B cell (primary cell): ENCODE measurements at regions of chr1 and their contacts with region 1.

Region 1: GRCh38 chr1:192808518-192809306 is at the start of gene RGS2:
- DNase-seq: peak; percentile 95
- ATAC-seq: peak; percentile 85
- H3K4me3 ChIP-seq: peak within 1 kb of the TSS; percentile 58 to 99 (median 90)
- H3K4me3 Mint-ChIP-seq: peak within 1 kb of the TSS; percentile 96
- H3K27ac ChIP-seq: peak within 1 kb of the TSS; percentile 65 to 76
- H3K27ac Mint-ChIP-seq: peak within 1 kb of the TSS; percentile 95
- H3K4me1 ChIP-seq: peaks cover 23 to 24% of the 10 kb centered on the region in 2 donors
- H3K4me1 Mint-ChIP-seq: peaks cover 46% of the 10 kb centered on the region
- H3K27me3 ChIP-seq: peaks cover 0 to 3% (median 0%) of the 10 kb centered on the region in 4 experiments
- H3K27me3 Mint-ChIP-seq: no peaks in the 10 kb centered on the region
- CTCF ChIP-seq: peak; percentile 15
- total RNA-seq, gene RGS2: 224 and 232 TPM in 2 replicates

Region 2: DNA sequence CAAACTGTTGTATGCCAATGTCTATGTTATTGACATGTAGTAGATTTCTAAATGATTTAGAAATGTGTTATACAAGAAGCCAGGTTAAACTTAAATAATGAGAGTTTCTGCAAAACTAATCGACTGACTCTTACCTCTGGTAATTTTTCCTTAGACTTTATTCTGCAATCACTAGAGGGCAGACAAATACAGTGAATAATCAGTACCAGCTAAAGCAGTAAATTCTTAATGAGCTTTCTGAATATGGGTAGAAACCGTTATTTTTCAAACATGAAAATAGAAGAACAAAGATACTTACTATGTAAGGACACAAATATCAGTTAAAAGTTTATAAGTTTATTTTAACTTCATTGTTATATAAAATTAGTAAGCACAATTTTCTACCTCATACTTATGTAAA is 331.1 kb before region 1 on chr1:
- CTCF ChIA-PET with region 1: interaction called, 127 read pairs
- POLR2A ChIA-PET with region 1: no interaction called
- intact Hi-C with region 1: loop called (anchors 2 kb)
- DNase-seq: peak; percentile 64
- ATAC-seq: peak; percentile 58
- H3K4me3 ChIP-seq: no peak overlapping the region
- H3K4me3 Mint-ChIP-seq: no peak overlapping the region
- H3K27ac ChIP-seq: no peak overlapping the region
- H3K27ac Mint-ChIP-seq: no peak overlapping the region
- H3K4me1 ChIP-seq: no peaks in the 10 kb centered on the region
- H3K4me1 Mint-ChIP-seq: no peaks in the 10 kb centered on the region
- H3K27me3 ChIP-seq: peaks cover 0 to 14% (median 10%) of the 10 kb centered on the region in 4 experiments
- H3K27me3 Mint-ChIP-seq: peaks cover 16% of the 10 kb centered on the region
- CTCF ChIP-seq: peak; percentile 77

Region 3: GRCh38 chr1:192580351-192580962 is 228.3 kb before region 1 on chr1:
- CTCF ChIA-PET with region 1: interaction called, 7 read pairs
- POLR2A ChIA-PET with region 1: no interaction called
- intact Hi-C with region 1: loop called (anchors 1 kb)
- DNase-seq: peak; percentile 55
- ATAC-seq: no peak
- H3K4me3 ChIP-seq: no peak overlapping the region
- H3K4me3 Mint-ChIP-seq: peak overlapping the region; percentile 73
- H3K27ac ChIP-seq: no peak overlapping the region
- H3K27ac Mint-ChIP-seq: no peak overlapping the region
- H3K4me1 ChIP-seq: peaks cover 11 to 13% of the 10 kb centered on the region in 2 donors
- H3K4me1 Mint-ChIP-seq: peaks cover 38% of the 10 kb centered on the region
- H3K27me3 ChIP-seq: peaks cover 0 to 5% (median 0%) of the 10 kb centered on the region in 4 experiments
- H3K27me3 Mint-ChIP-seq: peaks cover 6% of the 10 kb centered on the region
- CTCF ChIP-seq: peak; percentile 31

Region 4: DNA sequence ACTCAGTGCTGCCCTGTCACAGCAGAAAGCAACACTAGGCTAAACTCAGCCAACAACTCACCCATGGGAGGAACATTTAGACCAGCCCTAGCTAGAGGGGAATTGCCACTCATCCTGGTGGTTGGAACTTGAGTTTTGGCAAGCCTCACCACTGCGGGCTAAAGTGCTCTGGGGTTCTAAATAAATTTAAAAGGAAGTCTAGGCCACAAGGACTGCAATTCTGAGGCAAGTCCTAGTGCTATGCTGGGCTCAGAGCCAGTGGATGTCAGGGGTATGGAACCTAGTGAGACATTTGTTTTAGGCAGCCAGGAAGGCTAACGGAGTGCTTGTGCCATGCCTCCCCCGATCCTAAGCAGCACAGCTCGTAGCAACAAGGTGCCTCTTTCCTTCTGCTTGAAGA is 94.8 kb before region 1 on chr1:
- CTCF ChIA-PET with region 1: no interaction called
- POLR2A ChIA-PET with region 1: no interaction called
- intact Hi-C with region 1: no loop called
- DNase-seq: no peak
- ATAC-seq: no peak
- H3K4me3 ChIP-seq: no peak overlapping the region
- H3K4me3 Mint-ChIP-seq: no peak overlapping the region
- H3K27ac ChIP-seq: no peak overlapping the region
- H3K27ac Mint-ChIP-seq: no peak overlapping the region
- H3K4me1 ChIP-seq: no peaks in the 10 kb centered on the region
- H3K4me1 Mint-ChIP-seq: no peaks in the 10 kb centered on the region
- H3K27me3 ChIP-seq: peaks cover 0 to 3% (median 0%) of the 10 kb centered on the region in 4 experiments
- H3K27me3 Mint-ChIP-seq: peaks cover 21% of the 10 kb centered on the region
- CTCF ChIP-seq: no peak

Region 5: GRCh38 chr1:192766009-192766625 is 42.6 kb before region 1 on chr1:
- CTCF ChIA-PET with region 1: no interaction called
- POLR2A ChIA-PET with region 1: no interaction called
- intact Hi-C with region 1: no loop called
- DNase-seq: no peak
- ATAC-seq: no peak
- H3K4me3 ChIP-seq: no peak overlapping the region
- H3K4me3 Mint-ChIP-seq: no peak overlapping the region
- H3K27ac ChIP-seq: no peak overlapping the region
- H3K27ac Mint-ChIP-seq: no peak overlapping the region
- H3K4me1 ChIP-seq: no peaks in the 10 kb centered on the region
- H3K4me1 Mint-ChIP-seq: no peaks in the 10 kb centered on the region
- H3K27me3 ChIP-seq: peaks cover 0 to 7% (median 0%) of the 10 kb centered on the region in 4 experiments
- H3K27me3 Mint-ChIP-seq: peaks cover 30% of the 10 kb centered on the region
- CTCF ChIP-seq: no peak

Region 6: DNA sequence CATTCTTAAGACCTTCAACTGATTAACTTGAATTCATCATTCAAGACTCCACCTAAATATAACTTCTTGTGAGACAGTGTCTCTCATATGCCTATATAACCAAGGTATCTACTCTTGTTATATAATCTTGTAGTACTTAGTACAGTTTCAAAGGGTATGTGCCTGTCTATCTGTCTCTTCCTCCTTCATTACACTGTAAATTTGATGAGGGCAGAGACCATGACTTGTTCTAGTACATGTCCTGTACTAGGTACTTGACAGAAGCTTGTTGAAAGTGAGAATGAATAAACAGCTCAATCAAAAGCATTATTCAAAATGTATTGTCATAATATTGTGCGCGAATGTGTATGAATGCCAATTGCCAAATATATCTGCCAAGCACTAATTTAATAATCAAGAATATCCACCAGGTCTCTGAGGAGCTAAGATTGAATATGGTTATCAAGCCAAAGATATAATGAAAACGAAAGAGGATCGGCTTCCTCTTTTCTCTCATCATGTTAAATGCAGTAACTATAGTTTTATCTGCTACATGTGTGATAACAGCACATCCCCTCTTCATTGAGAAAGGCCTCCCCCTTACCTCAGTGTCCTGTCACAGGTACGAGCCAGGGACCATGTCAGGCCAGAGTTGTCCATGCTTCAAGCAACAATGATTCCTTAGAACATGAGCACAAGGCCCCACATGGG is 133.2 kb after region 1 on chr1:
- CTCF ChIA-PET with region 1: interaction called, 3 read pairs
- POLR2A ChIA-PET with region 1: no interaction called
- intact Hi-C with region 1: loop called (anchors 5 kb)
- DNase-seq: peak; percentile 33
- ATAC-seq: no peak
- H3K4me3 ChIP-seq: no peak overlapping the region
- H3K4me3 Mint-ChIP-seq: no peak overlapping the region
- H3K27ac ChIP-seq: no peak overlapping the region
- H3K27ac Mint-ChIP-seq: peak overlapping the region; percentile 74
- H3K4me1 ChIP-seq: peaks cover 0 to 11% of the 10 kb centered on the region in 2 donors
- H3K4me1 Mint-ChIP-seq: peaks cover 12% of the 10 kb centered on the region
- H3K27me3 ChIP-seq: no peaks in the 10 kb centered on the region
- H3K27me3 Mint-ChIP-seq: no peaks in the 10 kb centered on the region
- CTCF ChIP-seq: no peak

Region 7: DNA sequence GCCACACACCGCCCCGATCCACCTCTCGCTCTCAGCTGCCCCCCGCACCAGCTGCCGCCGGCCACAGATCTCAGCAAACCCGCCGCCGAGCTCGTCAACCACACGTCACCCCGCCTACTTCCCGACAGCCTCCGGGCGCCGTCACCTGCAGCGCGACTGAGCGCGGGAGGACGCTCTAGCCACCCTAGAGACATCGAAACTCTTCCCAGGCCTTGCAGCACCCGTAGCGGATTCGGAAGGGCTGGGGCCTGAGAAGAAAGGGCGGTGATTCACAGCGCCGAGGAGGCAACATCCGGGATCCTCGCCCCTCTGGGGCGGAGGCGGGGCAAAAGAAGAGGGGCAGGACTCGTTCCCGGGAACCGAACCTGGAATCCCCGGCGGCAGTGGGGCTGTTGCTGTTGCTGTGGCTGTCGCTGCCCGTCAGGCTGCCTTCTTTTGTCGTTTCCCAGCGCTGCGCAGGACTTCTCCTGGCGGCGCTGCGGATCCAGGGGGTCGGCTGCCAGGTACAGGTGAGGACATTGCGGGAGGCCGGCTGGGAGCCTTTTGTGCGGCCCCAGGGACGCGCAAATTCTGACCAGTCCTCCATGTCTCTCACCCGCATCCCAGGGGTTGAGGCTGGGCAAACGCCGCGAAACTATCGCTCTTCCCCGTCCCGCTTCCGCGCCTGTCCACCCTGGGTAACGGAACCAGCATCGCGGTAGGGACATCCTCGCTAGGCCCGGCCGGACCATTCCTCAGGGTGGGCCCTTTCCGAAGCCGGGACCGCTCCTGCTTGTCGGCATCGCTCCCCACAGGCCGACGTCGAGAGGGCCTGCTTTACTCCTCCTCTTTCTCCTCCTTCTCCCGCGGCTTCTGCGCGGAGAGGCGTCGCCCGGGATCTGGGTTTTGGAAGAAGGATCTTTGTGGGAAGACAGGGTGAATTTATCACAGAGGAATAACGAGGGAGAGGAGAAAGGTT is 250.8 kb after region 1 on chr1 and contains the starts of genes RO60 and UCHL5:
- CTCF ChIA-PET with region 1: interaction called, 8 read pairs
- POLR2A ChIA-PET with region 1: interaction called, 9 read pairs
- intact Hi-C with region 1: loop called (anchors 1 kb)
- DNase-seq: peak; percentile 96
- ATAC-seq: peak; percentile 95
- H3K4me3 ChIP-seq: peak within 1 kb of the TSS; percentile 62 to 99 (median 91)
- H3K4me3 Mint-ChIP-seq: peak within 1 kb of the TSS; percentile 98
- H3K27ac ChIP-seq: peak within 1 kb of the TSS; percentile 89 to 94
- H3K27ac Mint-ChIP-seq: peak within 1 kb of the TSS; percentile 99
- H3K4me1 ChIP-seq: peaks cover 21 to 25% of the 10 kb centered on the region in 2 donors
- H3K4me1 Mint-ChIP-seq: peaks cover 51% of the 10 kb centered on the region
- H3K27me3 ChIP-seq: no peaks in the 10 kb centered on the region
- H3K27me3 Mint-ChIP-seq: no peaks in the 10 kb centered on the region
- CTCF ChIP-seq: no peak
- total RNA-seq, gene RO60: 66.4 and 78.2 TPM in 2 replicates
- total RNA-seq, gene UCHL5: 31.5 and 32.9 TPM in 2 replicates

Region 8: DNA sequence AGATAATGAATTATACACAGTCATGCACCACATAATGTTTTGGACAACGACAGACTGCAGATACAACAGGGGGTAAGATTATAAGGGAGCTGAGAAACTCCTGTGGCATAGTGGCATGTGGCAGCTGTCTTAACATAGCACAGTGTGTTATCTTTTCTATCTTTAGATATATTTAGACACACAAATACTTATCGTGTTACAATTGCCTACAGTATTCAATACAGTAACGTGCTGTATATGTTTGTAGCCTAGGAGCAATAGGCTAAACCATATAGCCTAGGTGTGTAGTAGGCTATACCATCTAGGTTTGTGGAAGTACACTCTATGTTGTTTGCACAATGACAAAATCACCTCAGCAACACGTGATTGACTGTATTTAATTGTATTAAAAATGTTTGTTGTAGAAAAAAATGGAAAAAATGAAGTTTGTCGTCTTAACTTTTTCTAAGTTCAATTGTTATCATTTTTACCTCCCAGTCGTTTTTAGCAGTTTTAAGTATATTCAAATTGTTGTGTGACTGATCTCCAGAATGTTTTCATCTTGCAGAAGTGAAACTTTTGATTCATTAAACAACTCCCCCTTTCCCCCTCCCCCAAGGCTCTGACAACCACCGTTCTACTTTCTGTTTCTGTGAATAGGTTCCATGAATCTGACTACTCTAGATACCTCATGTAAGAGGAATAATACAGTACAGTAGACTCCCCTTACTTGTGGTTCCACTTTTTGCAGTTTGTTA is 728.7 kb after region 1 on chr1:
- CTCF ChIA-PET with region 1: no interaction called
- POLR2A ChIA-PET with region 1: no interaction called
- intact Hi-C with region 1: loop called (anchors 5 kb)
- DNase-seq: peak; percentile 87
- ATAC-seq: peak; percentile 94
- H3K4me3 ChIP-seq: peak overlapping the region in 1 of 5 experiments; percentile 37
- H3K4me3 Mint-ChIP-seq: peak overlapping the region; percentile 61
- H3K27ac ChIP-seq: peak overlapping the region; percentile 30 to 42
- H3K27ac Mint-ChIP-seq: peak overlapping the region; percentile 62
- H3K4me1 ChIP-seq: peaks cover 32 to 38% of the 10 kb centered on the region in 2 donors
- H3K4me1 Mint-ChIP-seq: peaks cover 42% of the 10 kb centered on the region
- H3K27me3 ChIP-seq: no peaks in the 10 kb centered on the region
- H3K27me3 Mint-ChIP-seq: no peaks in the 10 kb centered on the region
- CTCF ChIP-seq: no peak